ENCODE measurements at regions of chr11 and their contacts with region 1.

Region 1: GRCh38 chr11:14148653-14149273 is 186.2 kb downstream of the SPON1 start:
- DNase-seq: peak; percentile 72
- ATAC-seq: peak; percentile 92
- H3K4me3 ChIP-seq: no peak overlapping the region
- H3K27ac ChIP-seq: no peak overlapping the region
- H3K4me1 ChIP-seq: no peaks in the 10 kb centered on the region; the same call in 1 of the 2 replicates
- H3K27me3 ChIP-seq: no peaks in the 10 kb centered on the region; the same call in 1 of the 2 replicates
- CTCF ChIP-seq: peak; percentile 77

Region 2: DNA sequence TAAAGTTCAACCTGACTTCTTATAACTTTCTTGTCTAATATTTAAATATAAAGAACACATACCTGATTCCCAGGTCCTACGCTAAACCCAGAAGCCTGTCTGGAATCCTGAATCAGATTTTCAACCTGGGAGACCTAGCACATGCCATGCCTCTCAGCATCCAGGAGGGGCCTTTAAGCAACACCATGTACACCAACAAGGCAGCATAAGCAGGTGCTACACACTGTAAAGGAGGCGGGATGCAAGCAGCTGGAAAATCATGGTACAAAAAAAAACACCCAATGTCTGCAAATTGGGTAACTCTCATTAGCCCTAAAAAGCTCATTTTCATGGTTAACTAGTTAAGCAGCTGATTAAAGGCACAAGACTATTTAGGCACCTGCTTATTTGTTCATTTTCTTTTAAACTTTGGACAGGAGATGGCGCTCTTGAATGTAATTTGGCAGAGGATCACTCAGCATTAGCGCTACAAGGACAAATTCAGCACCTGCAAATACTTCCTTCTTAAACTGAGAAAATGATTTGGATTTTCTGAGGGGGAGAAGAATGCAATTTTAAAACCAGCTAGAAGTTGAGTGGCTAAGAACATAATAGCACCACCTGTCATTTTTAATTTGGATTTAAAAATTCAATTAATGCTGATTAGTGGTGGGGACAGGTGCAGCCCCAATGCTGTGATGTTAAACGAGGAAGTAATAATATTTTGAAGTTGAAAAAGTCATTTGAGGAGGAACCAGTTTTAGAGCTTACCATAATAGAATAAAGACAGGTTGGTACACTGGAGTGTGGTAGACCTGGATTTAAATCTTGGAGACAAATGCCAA is 376.3 kb before region 1 on chr11:
- CTCF ChIA-PET with region 1: interaction called, 6 read pairs
- POLR2A ChIA-PET with region 1: no interaction called
- intact Hi-C with region 1: loop called (anchors 1 kb)
- DNase-seq: peak; percentile 76
- ATAC-seq: peak; percentile 67
- H3K4me3 ChIP-seq: no peak overlapping the region
- H3K27ac ChIP-seq: no peak overlapping the region
- H3K4me1 ChIP-seq: no peaks in the 10 kb centered on the region
- H3K27me3 ChIP-seq: no peaks in the 10 kb centered on the region
- CTCF ChIP-seq: peak; percentile 80

Region 3: DNA sequence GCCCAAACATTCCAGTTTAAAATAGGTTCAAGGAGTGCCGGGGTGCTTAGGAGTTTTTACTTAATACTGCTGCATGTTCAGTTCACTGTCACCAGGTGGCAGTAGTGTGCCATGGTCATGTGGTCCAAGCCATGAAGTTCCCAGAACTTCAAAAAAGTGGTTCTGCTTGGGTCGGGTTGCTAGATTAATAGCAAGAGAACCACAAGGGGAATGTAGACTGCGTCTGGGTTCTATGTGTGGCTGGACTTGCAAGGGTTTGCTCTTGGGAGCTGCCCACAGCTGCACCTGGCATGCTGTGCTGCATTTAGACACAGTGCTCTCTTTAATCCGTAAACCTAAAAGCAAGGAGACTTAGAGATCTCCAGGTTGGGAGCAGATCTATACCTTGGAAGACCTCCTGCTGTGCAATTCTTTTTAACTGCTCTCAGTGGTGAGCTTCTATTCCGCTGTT is 192.8 kb before region 1 on chr11:
- CTCF ChIA-PET with region 1: interaction called, 5 read pairs
- POLR2A ChIA-PET with region 1: no interaction called
- intact Hi-C with region 1: loop called (anchors 1 kb)
- DNase-seq: peak; percentile 76
- ATAC-seq: peak; percentile 53; the same call in 1 of the 2 replicates
- H3K4me3 ChIP-seq: no peak overlapping the region
- H3K27ac ChIP-seq: no peak overlapping the region
- H3K4me1 ChIP-seq: peaks cover 5% of the 10 kb centered on the region; the same call in 1 of the 2 replicates
- H3K27me3 ChIP-seq: peaks cover 7% of the 10 kb centered on the region; the same call in 1 of the 2 replicates
- CTCF ChIP-seq: peak; percentile 89

Region 4: GRCh38 chr11:13970986-13971385 is 177.8 kb before region 1 on chr11:
- CTCF ChIA-PET with region 1: interaction called, 4 read pairs
- POLR2A ChIA-PET with region 1: no interaction called
- intact Hi-C with region 1: loop called (anchors 1 kb)
- DNase-seq: peak; percentile 68
- ATAC-seq: peak; percentile 98
- H3K4me3 ChIP-seq: no peak overlapping the region
- H3K27ac ChIP-seq: no peak overlapping the region
- H3K4me1 ChIP-seq: no peaks in the 10 kb centered on the region; the same call in 1 of the 2 replicates
- H3K27me3 ChIP-seq: no peaks in the 10 kb centered on the region
- CTCF ChIP-seq: peak; percentile 89

Region 5: GRCh38 chr11:14041040-14041439 is 107.7 kb before region 1 on chr11:
- CTCF ChIA-PET with region 1: no interaction called
- POLR2A ChIA-PET with region 1: no interaction called
- intact Hi-C with region 1: loop called (anchors 5 kb)
- DNase-seq: peak; percentile 46
- ATAC-seq: peak; percentile 58; the same call in 1 of the 2 replicates
- H3K4me3 ChIP-seq: no peak overlapping the region
- H3K27ac ChIP-seq: no peak overlapping the region
- H3K4me1 ChIP-seq: peaks cover 9% of the 10 kb centered on the region; the same call in 1 of the 2 replicates
- H3K27me3 ChIP-seq: peaks cover 6% of the 10 kb centered on the region; the same call in 1 of the 2 replicates
- CTCF ChIP-seq: peak; percentile 70

Region 6: GRCh38 chr11:14101388-14101787 is 47.4 kb before region 1 on chr11:
- CTCF ChIA-PET with region 1: no interaction called
- POLR2A ChIA-PET with region 1: no interaction called
- intact Hi-C with region 1: no loop called
- DNase-seq: no peak
- ATAC-seq: peak; percentile 29; the same call in 1 of the 2 replicates
- H3K4me3 ChIP-seq: no peak overlapping the region
- H3K27ac ChIP-seq: no peak overlapping the region
- H3K4me1 ChIP-seq: peaks cover 4% of the 10 kb centered on the region; the same call in 1 of the 2 replicates
- H3K27me3 ChIP-seq: 0 out of 2 replicates have a peak, but pooled peaks cover 3% of the 10 kb centered on the region
- CTCF ChIP-seq: no peak

Region 7: DNA sequence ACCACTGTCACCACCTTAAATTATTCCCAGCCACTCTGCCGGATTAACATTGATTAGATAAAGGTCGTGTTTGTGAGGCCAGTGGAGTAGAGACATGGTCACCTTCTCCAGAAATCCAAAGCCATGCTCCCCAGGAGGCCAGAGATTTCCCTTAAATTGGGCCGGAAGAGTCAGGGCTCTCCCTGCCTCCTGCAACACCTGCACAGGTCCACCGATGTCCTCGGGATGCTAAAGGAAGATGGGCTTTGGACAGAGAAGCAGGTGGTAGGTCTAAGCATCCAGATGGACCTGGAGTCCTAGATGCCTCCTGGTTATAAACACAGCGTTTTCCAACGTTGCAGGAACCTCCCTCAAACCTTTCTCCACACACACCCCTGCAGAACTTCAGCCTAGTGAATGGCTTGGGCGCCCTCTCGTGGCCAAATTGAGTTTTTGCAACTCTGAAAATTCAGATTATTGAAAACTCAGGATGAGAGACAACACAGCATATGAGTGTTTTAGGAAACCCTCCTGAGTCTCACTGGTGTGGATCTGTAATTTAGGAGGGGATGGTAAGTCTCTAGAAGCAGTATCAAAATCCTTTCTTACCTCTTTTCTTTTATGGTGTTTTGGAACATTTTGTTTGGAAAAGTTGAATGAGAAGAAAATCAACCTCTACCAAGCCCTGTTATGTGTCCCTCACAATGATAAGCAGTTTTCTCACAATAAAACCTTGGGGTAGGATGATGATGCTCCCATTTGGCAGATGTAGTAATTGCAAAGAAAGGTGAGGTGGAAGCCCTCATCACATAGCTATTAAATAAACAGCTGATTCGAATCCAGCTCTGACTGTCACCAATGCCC is 100.6 kb after region 1 on chr11:
- CTCF ChIA-PET with region 1: interaction called, 6 read pairs
- POLR2A ChIA-PET with region 1: no interaction called
- intact Hi-C with region 1: loop called (anchors 1 kb)
- DNase-seq: peak; percentile 77
- ATAC-seq: peak; percentile 77
- H3K4me3 ChIP-seq: no peak overlapping the region
- H3K27ac ChIP-seq: no peak overlapping the region
- H3K4me1 ChIP-seq: no peaks in the 10 kb centered on the region
- H3K27me3 ChIP-seq: no peaks in the 10 kb centered on the region
- CTCF ChIP-seq: peak; percentile 94

Measured in PC-3 (cell line).